Left lung (tissue), 14 donors: ENCODE measurements at regions of chr1 and their contacts with region 1.

Region 1: DNA sequence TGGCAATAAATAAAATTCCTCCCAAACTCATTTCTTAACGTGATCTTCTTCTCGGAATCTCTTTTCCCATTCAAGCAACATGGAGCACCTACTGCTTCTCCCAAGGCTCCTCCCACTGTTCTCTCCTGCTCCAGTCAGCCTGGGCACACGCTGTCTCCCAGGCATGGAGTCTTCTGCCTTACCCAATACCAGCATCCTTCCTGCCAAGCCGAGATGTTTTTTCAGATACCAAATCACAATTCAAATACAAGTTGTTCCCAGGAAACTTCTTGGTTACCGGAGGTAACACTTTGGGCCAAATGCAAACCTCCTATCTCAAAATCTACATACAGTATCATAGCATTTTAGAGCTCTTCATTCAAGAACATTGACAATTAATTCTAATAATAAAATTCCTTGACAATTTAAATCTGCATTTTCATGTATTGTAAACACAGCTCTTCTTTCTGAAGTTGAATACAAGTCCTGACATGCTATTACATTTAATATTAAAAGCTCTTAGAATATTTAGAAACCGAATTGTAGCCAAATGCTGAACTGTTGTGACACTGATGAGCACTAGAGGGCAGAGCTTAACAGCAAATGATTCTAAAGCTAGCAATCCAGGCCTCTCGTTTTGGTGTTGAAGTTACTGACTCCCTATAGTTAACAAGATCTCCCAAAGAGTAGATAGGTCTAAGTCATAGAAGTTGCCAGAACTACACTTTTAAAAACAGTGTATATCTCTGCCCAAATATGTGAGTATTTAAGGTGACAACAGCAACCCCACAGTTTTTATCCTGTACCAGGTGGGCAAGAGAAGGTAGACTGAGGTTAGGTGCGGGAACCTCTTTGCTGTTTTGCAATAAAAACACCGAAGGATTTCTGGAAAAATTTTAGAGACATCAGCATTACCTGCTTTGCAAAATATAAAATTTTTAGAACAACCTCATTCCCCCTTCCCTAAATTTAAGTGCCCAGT is 52.3 kb downstream of the BCAR3 start:
- DNase-seq: peak in 2 of 4 donors; percentile 62 to 77
- ATAC-seq: peak; percentile 91
- H3K4me3 ChIP-seq: no peak overlapping the region
- H3K27ac ChIP-seq: no peak overlapping the region
- H3K4me1 ChIP-seq: peaks cover 0 to 28% of the 10 kb centered on the region in 2 donors
- H3K27me3 ChIP-seq: no peaks in the 10 kb centered on the region
- CTCF ChIP-seq: peak; percentile 65 to 69

Region 2: DNA sequence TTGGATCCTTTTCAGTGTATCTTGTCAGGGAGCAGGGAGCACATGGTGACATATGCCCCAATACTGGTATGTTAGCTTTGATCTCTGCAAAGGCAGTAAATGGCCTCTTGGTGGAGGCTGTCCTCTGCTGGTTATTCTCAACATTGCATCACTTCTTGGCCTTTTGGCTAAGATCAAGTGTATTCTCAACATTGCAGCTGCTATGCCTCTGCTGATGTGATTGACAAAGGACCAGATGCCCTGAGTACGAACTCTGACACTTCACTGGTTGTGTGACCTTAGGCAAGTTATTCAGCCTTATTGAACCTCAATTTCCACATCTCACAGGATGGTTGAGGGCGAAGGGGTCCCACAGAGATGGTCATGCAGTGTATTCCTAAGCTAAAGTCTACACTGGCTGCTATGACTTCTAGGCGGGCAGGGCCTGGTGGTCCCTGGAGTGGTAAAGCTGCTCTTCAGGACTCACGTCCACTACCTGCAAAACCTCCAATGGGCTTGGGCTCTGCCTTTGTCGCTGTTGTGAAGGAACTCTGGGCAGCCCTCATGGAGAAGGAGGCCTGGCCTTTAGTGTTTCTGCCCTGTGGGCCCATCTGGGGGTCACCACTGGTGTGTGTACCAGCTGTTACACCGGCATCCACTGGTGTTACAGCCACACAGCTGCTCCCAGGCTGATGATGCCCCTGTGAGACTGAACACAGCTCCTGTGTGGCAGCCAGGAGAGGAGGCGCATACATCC is 184.8 kb after region 1 on chr1:
- intact Hi-C with region 1: loop called in 1 of 2 experiments (anchors 5 kb)
- DNase-seq: peak in 2 of 4 donors; percentile 70 to 84
- ATAC-seq: peak; percentile 88
- H3K4me3 ChIP-seq: no peak overlapping the region
- H3K27ac ChIP-seq: no peak overlapping the region
- H3K4me1 ChIP-seq: peaks cover 14 to 31% of the 10 kb centered on the region in 2 donors
- H3K27me3 ChIP-seq: no peaks in the 10 kb centered on the region
- CTCF ChIP-seq: peak; percentile 82 to 98